CD4-positive, alpha-beta memory T cell (primary cell): ENCODE measurements at regions of chr1 and their contacts with region 1.

Region 1: DNA sequence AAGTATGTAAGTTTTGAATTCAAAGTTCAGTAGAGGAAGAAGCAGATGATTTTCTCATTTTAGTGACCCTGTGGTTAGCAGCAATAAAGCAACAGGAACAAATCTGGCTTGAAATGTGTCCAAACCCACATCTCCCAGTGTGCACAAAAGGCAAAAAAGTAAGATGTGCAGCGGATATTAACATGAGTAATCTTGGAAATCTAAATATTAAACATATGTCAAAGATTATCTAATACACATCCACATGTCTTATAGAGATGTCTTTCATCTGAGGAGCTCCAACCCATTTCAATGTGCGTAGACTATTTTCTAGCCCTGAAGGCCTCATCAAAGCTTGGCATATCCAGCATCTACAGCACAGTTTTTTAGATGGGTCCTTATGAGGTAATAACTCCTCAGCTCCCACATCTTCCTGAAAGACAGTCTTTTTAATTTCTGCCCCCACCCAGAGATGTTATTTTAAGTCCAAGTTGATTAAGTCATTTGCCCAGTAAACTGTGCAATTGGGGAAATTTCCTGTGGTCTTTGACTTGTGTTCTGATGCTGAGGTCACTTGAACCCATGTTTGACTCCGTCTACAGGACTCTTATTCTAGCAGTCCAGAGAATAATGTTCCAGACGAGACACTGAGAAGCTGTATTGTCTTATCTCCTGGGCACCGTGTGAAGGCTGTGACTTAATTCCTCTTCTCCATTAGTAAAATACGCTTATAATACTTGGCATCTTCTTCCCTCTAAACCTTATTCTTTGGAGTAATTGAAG is 73.7 kb downstream of the LMO4 start:
- DNase-seq: no peak
- H3K4me3 ChIP-seq: no peak overlapping the region
- H3K4me3 Mint-ChIP-seq: no peak overlapping the region
- H3K27ac ChIP-seq: no peak overlapping the region
- H3K27ac Mint-ChIP-seq: peak overlapping the region in 3 of 7 donors; percentile 8 to 71 (median 22)
- H3K4me1 ChIP-seq: peaks cover 22% of the 10 kb centered on the region
- H3K4me1 Mint-ChIP-seq: peaks cover 18 to 35% (median 24%) of the 10 kb centered on the region in 4 donors
- H3K27me3 ChIP-seq: no peaks in the 10 kb centered on the region
- H3K27me3 Mint-ChIP-seq: no peaks in the 10 kb centered on the region

Region 2: DNA sequence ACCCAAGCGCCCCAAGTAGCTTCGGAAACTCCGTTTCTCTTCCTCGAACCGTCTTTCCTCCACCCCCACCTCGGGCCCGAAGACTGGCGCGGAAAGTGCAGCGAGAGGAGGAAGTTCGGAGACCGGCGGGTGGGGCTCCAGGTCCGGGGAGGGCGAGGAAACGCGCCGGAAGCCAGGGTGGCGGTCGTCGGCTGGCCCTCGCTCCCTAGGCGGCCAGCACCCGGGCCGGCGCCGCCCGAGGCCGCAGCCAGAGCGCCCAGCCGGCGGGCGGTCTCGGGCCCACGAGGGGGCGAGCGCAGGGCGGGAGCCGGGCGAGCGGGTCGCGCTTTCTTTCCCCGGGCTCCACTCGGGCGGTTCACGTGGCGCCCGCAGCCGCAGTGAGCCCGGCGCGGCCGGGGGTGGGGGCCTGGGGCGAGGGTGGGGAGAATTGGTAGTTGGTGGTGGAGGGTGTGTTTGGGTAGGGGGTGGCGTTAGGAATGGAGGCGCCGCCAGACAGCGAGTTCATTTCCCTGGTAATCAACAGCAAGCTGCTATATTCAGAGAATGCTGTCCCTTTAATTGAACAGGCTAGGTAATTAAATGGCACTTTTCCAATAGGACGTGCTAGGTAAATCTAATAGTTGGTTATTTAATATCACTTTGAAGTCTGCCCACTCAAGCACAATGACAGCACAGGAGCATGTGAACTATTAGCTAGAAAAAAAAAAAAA is 67.1 kb before region 1 on chr1:
- CTCF ChIA-PET with region 1: interaction called, 10 read pairs
- POLR2A ChIA-PET with region 1: interaction called, 34 read pairs
- intact Hi-C with region 1: loop called (anchors 1 kb)
- DNase-seq: peak; percentile 48 to 76 (median 66)
- H3K4me3 ChIP-seq: peak overlapping the region in 1 of 2 donors; percentile 51
- H3K4me3 Mint-ChIP-seq: peak overlapping the region; percentile 90 to 97 (median 92)
- H3K27ac ChIP-seq: peak overlapping the region; percentile 54
- H3K27ac Mint-ChIP-seq: peak overlapping the region; percentile 65 to 96 (median 93)
- H3K4me1 ChIP-seq: peaks cover 51% of the 10 kb centered on the region
- H3K4me1 Mint-ChIP-seq: peaks cover 38 to 73% (median 50%) of the 10 kb centered on the region in 4 donors
- H3K27me3 ChIP-seq: no peaks in the 10 kb centered on the region
- H3K27me3 Mint-ChIP-seq: peaks cover 0 to 3% of the 10 kb centered on the region in 2 donors

Region 3: GRCh38 chr1:87418048-87418447 is 15.6 kb after region 1 on chr1:
- CTCF ChIA-PET with region 1: no interaction called
- POLR2A ChIA-PET with region 1: no interaction called
- intact Hi-C with region 1: no loop called
- DNase-seq: no peak
- H3K4me3 ChIP-seq: no peak overlapping the region
- H3K4me3 Mint-ChIP-seq: no peak overlapping the region
- H3K27ac ChIP-seq: no peak overlapping the region
- H3K27ac Mint-ChIP-seq: no peak overlapping the region
- H3K4me1 ChIP-seq: no peaks in the 10 kb centered on the region
- H3K4me1 Mint-ChIP-seq: no peaks in the 10 kb centered on the region
- H3K27me3 ChIP-seq: no peaks in the 10 kb centered on the region
- H3K27me3 Mint-ChIP-seq: peaks cover 0 to 2% of the 10 kb centered on the region in 2 donors

Region 4: DNA sequence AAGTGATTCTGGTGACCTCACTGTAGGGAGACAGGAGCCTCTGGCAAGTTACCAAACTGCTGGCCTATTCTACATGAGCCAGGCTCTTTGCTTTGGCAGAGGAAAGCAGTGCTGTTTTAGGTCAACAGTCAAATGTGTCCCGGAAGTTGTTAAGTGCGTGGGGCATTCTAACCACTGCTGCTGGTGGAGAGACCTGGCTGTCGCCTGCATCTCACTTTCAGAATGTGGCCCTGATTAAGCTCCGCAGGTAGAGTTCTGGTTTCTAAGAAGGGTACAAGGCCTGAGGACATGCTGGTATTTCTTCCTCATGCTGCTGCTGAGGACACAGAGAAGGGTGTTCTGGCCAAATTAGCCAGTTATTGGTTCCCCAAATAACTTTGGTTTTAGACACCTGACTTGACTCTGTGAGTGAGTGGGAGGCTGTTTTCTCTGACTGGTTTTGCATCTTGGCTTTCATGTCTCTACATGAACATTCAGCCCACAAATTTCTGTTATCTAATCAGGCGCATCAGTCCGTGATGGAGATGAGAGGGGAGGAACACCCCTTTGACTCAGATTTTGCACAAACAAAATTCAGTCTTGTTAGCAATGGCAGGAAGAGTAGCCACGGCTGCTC is 47.0 kb after region 1 on chr1:
- CTCF ChIA-PET with region 1: interaction called, 3 read pairs
- POLR2A ChIA-PET with region 1: interaction called, 11 read pairs
- intact Hi-C with region 1: loop called (anchors 5 kb)
- DNase-seq: peak; percentile 41 to 56 (median 51)
- H3K4me3 ChIP-seq: no peak overlapping the region
- H3K4me3 Mint-ChIP-seq: peak overlapping the region; percentile 45 to 89 (median 79)
- H3K27ac ChIP-seq: no peak overlapping the region
- H3K27ac Mint-ChIP-seq: peak overlapping the region; percentile 78 to 95 (median 93)
- H3K4me1 ChIP-seq: peaks cover 18% of the 10 kb centered on the region
- H3K4me1 Mint-ChIP-seq: peaks cover 13 to 35% (median 28%) of the 10 kb centered on the region in 4 donors
- H3K27me3 ChIP-seq: no peaks in the 10 kb centered on the region
- H3K27me3 Mint-ChIP-seq: no peaks in the 10 kb centered on the region